A673 (cell line): ENCODE measurements at regions of chr19 and their contacts with region 1.

Region 1: GRCh38 chr19:55447421-55448174 is 4.5 kb upstream of the SHISA7 start:
- DNase-seq: peak; percentile 80
- H3K4me3 ChIP-seq: no peak overlapping the region
- H3K27ac ChIP-seq: no peak overlapping the region
- H3K4me1 ChIP-seq: peaks cover 16% of the 10 kb centered on the region
- H3K27me3 ChIP-seq: peaks cover 56% of the 10 kb centered on the region
- CTCF ChIP-seq: no peak

Region 2: GRCh38 chr19:53927739-53928138 is 1519.9 kb before region 1 on chr19:
- CTCF ChIA-PET with region 1: no interaction called
- POLR2A ChIA-PET with region 1: interaction called, 26 read pairs
- intact Hi-C with region 1: no loop called
- DNase-seq: peak; percentile 57
- H3K4me3 ChIP-seq: no peak overlapping the region
- H3K27ac ChIP-seq: no peak overlapping the region
- H3K4me1 ChIP-seq: no peaks in the 10 kb centered on the region
- H3K27me3 ChIP-seq: no peaks in the 10 kb centered on the region
- CTCF ChIP-seq: no peak

Region 3: DNA sequence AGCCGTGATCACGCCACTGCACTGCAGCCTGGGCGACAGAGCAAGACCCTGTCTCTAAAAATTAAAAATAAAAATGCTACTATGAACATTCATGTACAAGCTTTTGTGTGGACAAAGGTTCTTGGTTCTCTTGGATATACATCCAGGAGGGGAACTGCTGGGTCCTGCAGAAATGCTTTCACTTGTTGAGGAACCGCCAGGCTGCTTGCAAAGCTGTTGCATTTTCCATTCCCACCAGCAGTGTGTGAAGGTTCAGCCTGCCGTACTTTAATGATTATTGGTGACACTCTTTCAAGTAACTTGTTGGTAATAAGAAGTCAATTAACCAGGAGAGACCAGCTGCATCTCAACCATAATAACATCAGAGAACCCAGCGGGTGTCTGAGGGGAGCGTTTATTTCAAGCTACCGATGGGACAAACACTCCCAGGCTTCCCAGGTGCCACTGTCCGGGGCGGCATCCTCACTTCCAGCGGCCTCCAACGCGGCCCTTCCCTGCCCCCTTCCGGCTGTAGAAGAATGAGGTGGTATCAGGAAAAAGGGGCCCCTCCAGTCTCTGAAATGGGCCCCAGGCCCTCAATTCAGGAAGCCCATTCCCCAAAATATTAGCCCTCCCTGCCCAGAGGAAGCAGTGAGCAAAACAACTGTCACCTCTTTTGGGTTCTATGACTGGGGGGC is 315.0 kb before region 1 on chr19:
- CTCF ChIA-PET with region 1: no interaction called
- POLR2A ChIA-PET with region 1: interaction called, 11 read pairs
- intact Hi-C with region 1: no loop called
- DNase-seq: no peak
- H3K4me3 ChIP-seq: no peak overlapping the region
- H3K27ac ChIP-seq: no peak overlapping the region
- H3K4me1 ChIP-seq: peaks cover 4% of the 10 kb centered on the region
- H3K27me3 ChIP-seq: no peaks in the 10 kb centered on the region
- CTCF ChIP-seq: no peak

Region 4: DNA sequence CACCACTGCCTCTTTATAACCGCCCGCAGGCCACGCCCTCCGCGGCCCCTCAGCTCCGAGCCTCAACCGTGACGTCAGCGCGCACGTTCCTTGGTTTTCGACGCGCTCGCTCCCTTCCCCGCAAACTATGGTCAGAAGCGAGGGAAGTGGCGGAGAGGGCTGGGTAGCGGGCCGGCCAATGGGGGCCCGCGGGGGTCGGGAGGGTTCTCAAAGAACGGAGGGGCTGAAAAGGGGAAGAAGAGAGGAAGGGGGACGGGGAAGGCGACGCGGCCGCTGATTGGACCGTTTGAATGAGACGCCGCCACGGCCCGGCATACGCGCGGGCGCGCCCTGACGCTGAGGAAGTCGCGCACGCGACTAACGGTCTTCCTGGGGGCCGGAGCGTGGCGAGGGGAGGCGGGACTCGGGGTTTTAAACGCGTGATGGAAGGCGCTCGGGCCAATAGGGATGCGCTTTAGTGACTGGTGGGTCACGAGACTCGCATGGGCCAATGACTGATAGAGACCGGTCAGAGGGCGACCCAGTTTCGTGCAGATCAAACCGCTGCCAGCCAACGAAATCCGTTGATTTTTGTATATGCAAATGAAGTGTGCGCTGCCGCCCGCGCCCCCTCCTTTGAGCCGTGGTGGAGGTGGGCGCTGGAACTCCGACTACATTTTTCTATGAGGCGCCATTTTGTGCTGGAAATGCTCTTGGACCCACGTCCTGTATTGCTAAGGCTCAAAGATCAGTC is 39.6 kb before region 1 on chr19:
- CTCF ChIA-PET with region 1: no interaction called
- POLR2A ChIA-PET with region 1: interaction called, 24 read pairs
- intact Hi-C with region 1: no loop called
- DNase-seq: peak; percentile 100
- H3K4me3 ChIP-seq: peak overlapping the region; percentile 98
- H3K27ac ChIP-seq: peak overlapping the region; percentile 100
- H3K4me1 ChIP-seq: peaks cover 23% of the 10 kb centered on the region
- H3K27me3 ChIP-seq: no peaks in the 10 kb centered on the region
- CTCF ChIP-seq: no peak

Region 5: DNA sequence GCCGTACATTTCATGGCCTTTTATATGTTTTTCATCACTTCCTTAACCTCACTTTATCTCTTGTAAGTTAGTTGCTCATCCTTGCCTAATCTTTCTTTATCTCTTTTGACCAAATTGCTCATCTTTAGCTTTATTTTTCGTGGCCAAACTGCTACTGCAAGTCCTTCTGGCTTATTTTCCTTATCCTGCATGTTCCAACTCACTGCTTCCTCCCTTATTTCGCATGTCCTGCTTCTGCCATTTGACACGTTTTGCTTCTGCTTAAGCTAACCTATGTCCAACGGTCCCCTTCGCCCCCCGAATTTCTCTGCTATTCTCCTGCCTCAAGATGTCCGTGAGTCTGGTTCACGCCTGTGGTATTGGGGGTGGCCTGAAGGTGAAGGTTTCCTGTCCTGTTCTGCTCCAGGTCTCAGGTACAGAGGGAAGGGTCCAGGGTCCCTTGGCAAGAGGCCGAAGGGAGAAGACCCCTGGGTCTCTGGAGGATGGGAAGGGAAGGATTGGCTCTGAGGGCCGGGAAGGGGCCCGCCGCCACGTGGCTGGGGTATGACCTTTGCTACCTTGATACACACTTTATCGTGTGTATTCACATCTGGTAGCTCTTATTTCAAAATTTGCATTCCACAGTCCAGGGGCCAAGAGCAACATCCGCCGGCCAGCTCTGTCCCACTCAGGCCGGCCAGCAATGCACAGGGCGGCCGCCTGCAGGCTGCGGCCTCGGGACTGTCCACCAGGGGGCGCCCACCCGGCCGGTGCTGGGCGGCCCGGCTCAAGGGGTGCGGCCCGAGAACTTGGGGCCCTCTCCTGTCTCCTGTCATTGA is 19.8 kb after region 1 on chr19:
- CTCF ChIA-PET with region 1: no interaction called
- POLR2A ChIA-PET with region 1: no interaction called
- intact Hi-C with region 1: no loop called
- DNase-seq: no peak
- H3K4me3 ChIP-seq: no peak overlapping the region
- H3K27ac ChIP-seq: no peak overlapping the region
- H3K4me1 ChIP-seq: no peaks in the 10 kb centered on the region
- H3K27me3 ChIP-seq: no peaks in the 10 kb centered on the region
- CTCF ChIP-seq: peak; percentile 99